ENCODE measurements at regions of chr1 and their contacts with region 1.

Region 1: DNA sequence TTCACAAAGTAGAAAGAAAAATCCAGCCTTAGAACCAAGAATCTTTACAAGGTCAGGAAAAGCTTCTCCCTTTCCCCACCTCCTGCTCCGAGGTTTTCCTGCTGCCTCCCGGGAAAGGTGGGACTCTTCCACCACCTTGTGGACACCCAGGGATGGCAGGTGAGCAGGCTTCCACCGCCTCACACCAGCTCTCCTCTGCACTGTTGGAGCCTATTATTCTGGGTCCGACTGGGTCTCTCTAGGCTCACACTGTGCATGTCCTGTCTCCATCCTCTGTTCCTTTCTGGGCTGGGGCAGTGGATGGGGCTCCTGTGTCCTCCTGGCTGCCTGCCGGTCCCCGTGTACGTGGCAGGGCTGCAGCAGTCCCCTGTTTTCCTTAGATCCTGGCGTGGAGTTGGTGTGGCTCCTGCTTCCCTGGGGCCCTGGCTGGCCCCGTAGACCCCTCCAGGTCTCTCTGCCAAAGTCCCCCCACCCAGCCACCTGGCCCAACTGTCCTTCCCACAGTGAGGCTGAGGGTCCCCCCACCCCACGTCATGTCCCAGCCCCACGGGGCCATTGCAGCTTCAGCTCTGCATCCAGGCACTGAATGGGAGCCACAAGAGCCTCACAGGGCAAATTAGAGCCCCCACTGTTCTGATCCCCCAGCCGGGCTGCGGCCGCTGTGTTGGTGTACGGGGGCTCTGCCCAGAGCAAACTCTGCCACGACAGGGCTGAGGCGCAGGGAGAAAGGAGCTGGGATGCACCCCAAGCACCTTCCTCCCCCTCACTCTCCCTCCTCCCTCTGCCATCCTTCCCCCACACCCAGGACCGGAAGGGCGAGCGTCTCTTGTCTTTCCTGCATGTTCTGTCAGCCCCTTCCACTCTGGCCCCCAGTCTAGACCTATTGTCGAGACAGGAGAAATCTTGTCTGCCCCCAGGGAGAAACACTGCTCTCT is 3.3 kb upstream of the SLC45A1 start:
- DNase-seq: peak; percentile 86

Region 2: DNA sequence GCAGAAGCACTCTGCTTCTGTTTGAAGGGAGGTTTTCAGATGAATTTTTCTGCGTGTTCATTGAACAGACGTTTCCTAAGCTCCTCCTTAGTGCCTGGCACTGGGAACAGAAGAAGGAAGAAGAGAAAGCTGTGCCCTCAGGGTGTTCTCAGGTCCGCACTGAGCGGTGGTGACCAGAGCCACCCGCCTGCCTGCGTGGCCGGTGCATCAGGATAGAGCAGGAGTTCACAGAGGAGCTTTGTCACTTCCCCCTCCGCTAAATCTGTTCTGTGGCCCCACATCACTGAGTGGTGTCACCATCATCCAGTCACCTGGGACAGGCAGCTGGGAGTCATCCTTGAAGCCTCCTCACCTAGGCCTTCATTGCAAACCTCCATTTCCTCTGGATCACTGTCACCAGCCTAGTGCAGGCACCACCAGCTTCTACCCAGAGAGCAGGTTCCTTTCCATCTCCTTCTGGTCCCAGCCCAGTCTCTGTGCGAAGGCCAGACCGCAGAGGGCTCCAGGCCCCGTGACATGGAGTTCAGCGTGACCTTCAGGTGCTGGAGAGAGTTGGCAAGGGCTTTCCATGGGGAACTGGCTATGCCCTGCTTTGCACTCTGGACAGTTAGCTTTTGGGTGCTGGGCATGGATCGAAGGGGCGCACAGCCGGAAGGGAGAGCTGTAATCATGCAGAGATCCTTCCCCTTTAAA is 331.4 kb before region 1 on chr1:
- CTCF ChIA-PET with region 1: interaction called, 16 read pairs
- POLR2A ChIA-PET with region 1: no interaction called
- DNase-seq: no peak

Region 3: GRCh38 chr1:8015036-8015808 is 299.4 kb before region 1 on chr1:
- CTCF ChIA-PET with region 1: interaction called, 43 read pairs
- POLR2A ChIA-PET with region 1: interaction called, 5 read pairs
- DNase-seq: peak; percentile 50